ENCODE measurements at regions of chr10 and their contacts with region 1.

Region 1: GRCh38 chr10:72337020-72337629 is 17.6 kb downstream of the DNAJB12 start:
- DNase-seq: peak; percentile 84
- ATAC-seq: peak; percentile 8
- H3K4me3 Mint-ChIP-seq: peak overlapping the region; percentile 24
- H3K27ac Mint-ChIP-seq: peak overlapping the region; percentile 95
- H3K4me1 Mint-ChIP-seq: peaks cover 63% of the 10 kb centered on the region
- H3K27me3 Mint-ChIP-seq: no peaks in the 10 kb centered on the region

Region 2: DNA sequence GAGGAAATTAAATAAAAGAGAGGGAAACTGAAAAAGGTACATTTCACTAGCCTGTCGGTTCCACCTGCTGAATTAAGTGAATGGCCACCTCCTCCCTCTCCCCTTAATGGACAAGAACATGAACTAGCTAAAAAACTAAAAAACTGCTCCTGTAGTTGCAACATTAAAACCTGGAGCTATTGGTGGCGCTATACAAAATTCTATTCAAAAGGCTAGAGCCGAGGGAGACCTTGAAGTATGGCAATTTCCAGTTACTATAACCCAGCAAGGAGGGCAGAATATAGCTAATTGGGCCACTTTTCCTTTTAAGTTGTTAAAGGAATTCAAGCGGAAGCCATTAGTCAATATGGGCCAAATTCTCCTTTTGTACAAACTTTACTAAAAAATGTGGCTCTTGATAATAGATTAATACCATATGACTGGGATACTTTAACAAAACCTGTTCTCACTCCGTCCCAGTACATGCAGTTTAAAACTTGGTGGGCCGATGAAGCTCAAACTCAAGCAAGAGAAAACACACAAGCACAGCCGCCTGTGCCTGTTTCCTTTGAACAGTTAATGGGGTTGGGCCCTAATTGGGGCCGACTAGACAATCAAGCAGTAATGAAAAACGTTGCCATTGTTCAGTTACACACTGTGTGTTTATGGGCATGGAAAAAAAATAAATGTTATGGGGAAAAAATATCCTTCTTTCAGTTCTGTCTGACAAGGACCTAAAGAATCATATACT is 379.4 kb before region 1 on chr10:
- CTCF ChIA-PET with region 1: interaction called, 3 read pairs
- POLR2A ChIA-PET with region 1: no interaction called
- intact Hi-C with region 1: loop called (anchors 1 to 5 kb)
- DNase-seq: no peak
- ATAC-seq: no peak
- H3K4me3 Mint-ChIP-seq: no peak overlapping the region
- H3K27ac Mint-ChIP-seq: no peak overlapping the region
- H3K4me1 Mint-ChIP-seq: peaks cover 4% of the 10 kb centered on the region
- H3K27me3 Mint-ChIP-seq: peaks cover 13% of the 10 kb centered on the region

Region 3: GRCh38 chr10:72088889-72089575 is 248.1 kb before region 1 on chr10:
- CTCF ChIA-PET with region 1: interaction called, 6 read pairs
- POLR2A ChIA-PET with region 1: interaction called, 3 read pairs
- intact Hi-C with region 1: loop called (anchors 1 to 5 kb)
- DNase-seq: peak; percentile 79
- ATAC-seq: peak; percentile 50
- H3K4me3 Mint-ChIP-seq: peak overlapping the region; percentile 98
- H3K27ac Mint-ChIP-seq: peak overlapping the region; percentile 100
- H3K4me1 Mint-ChIP-seq: peaks cover 57% of the 10 kb centered on the region
- H3K27me3 Mint-ChIP-seq: no peaks in the 10 kb centered on the region

Region 4: GRCh38 chr10:72133517-72133916 is 203.6 kb before region 1 on chr10:
- CTCF ChIA-PET with region 1: interaction called, 34 read pairs
- POLR2A ChIA-PET with region 1: interaction called, 5 read pairs
- intact Hi-C with region 1: loop called in 1 of 2 experiments (anchors 2 kb)
- DNase-seq: no peak
- ATAC-seq: no peak
- H3K4me3 Mint-ChIP-seq: no peak overlapping the region
- H3K27ac Mint-ChIP-seq: peak overlapping the region; percentile 1
- H3K4me1 Mint-ChIP-seq: peaks cover 33% of the 10 kb centered on the region
- H3K27me3 Mint-ChIP-seq: no peaks in the 10 kb centered on the region

Region 5: GRCh38 chr10:72229261-72230251 is 107.6 kb before region 1 on chr10:
- CTCF ChIA-PET with region 1: interaction called, 11 read pairs
- POLR2A ChIA-PET with region 1: no interaction called
- intact Hi-C with region 1: no loop called
- DNase-seq: no peak
- ATAC-seq: no peak
- H3K4me3 Mint-ChIP-seq: no peak overlapping the region
- H3K27ac Mint-ChIP-seq: peak overlapping the region; percentile 75
- H3K4me1 Mint-ChIP-seq: peaks cover 38% of the 10 kb centered on the region
- H3K27me3 Mint-ChIP-seq: no peaks in the 10 kb centered on the region

Region 6: DNA sequence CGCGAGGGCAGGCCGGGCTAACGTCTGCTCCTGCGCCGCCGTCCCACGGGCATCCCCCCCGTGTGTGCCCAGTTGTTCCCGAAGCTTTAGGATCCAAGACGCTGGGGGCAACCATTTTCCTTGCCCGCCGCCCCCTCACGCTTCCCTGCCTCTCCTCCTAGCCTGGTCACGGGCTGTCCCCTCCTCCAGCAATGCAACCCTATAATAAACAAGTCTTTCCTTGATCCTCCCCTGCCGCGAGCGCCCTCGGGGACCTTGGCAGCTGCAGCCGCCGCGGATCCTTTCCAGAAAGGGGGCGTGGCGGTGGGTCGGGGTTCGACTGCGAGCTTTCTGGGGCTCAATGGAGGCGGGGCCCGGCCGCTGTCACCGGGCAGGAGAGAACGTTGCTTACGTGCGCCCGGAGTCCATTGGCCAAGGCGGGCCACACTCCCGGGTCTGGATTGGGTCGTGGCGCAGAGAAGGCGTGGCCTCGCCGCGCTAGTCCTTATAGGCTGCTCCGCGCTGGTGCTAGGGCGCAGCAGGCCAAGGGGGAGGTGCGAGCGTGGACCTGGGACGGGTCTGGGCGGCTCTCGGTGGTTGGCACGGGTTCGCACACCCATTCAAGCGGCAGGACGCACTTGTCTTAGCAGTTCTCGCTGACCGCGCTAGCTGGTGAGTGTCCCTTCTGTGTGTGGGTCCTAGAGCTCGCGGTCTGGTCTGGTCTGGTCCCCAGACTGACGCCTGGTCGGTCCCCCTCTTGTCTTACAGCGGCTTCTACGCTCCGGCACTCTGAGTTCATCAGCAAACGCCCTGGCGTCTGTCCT is 63.5 kb before region 1 on chr10 and contains the start of gene DDIT4:
- CTCF ChIA-PET with region 1: interaction called, 32 read pairs
- POLR2A ChIA-PET with region 1: interaction called, 48 read pairs
- intact Hi-C with region 1: loop called (anchors 1 to 2 kb)
- DNase-seq: peak; percentile 100
- ATAC-seq: peak; percentile 84
- H3K4me3 Mint-ChIP-seq: peak within 1 kb of the TSS; percentile 95
- H3K27ac Mint-ChIP-seq: peak within 1 kb of the TSS; percentile 99
- H3K4me1 Mint-ChIP-seq: peaks cover 44% of the 10 kb centered on the region
- H3K27me3 Mint-ChIP-seq: no peaks in the 10 kb centered on the region
- total RNA-seq, gene DDIT4: 750 to 1,039 TPM

Region 7: GRCh38 chr10:72348282-72348681 is 11.2 kb after region 1 on chr10:
- CTCF ChIA-PET with region 1: interaction called, 15 read pairs
- POLR2A ChIA-PET with region 1: interaction called, 4 read pairs
- intact Hi-C with region 1: no loop called
- DNase-seq: no peak
- ATAC-seq: no peak
- H3K4me3 Mint-ChIP-seq: no peak overlapping the region
- H3K27ac Mint-ChIP-seq: no peak overlapping the region
- H3K4me1 Mint-ChIP-seq: peaks cover 28% of the 10 kb centered on the region
- H3K27me3 Mint-ChIP-seq: no peaks in the 10 kb centered on the region

Measured in activated CD4-positive, alpha-beta T cell treated with anti-CD3 and anti-CD28 coated beads for 36 hours (primary cell).